ENCODE measurements at regions of chr19 and their contacts with region 1.

Region 1: GRCh38 chr19:7943444-7944176 is at the start of gene TIMM44:
- DNase-seq: peak; percentile 97
- ATAC-seq: peak; percentile 99
- H3K4me3 ChIP-seq: peak within 1 kb of the TSS; percentile 89
- H3K27ac ChIP-seq: peak within 1 kb of the TSS; percentile 77
- H3K4me1 ChIP-seq: peaks cover 7% of the 10 kb centered on the region
- H3K27me3 ChIP-seq: no peaks in the 10 kb centered on the region
- CTCF ChIP-seq: no peak
- EP300 ChIP-seq: 0 out of 4 replicates have a peak, but pooled peaks of 1 of the 2 experiments have one; percentile 10
- POLR2A ChIP-seq: peak; percentile 94
- RAD21 ChIP-seq: no peak
- polyA plus RNA-seq, gene TIMM44: 6.6 to 10.0 TPM

Region 2: GRCh38 chr19:7925171-7925851 is 18.3 kb before region 1 on chr19:
- CTCF ChIA-PET with region 1: interaction called, 44 read pairs
- POLR2A ChIA-PET with region 1: interaction called, 18 read pairs
- RAD21 ChIA-PET with region 1: interaction called, 17 read pairs
- SMC1A ChIA-PET with region 1: interaction called, 10 read pairs
- in situ Hi-C with region 1: no loop called
- intact Hi-C with region 1: no loop called
- DNase-seq: no peak
- ATAC-seq: peak; percentile 57
- H3K4me3 ChIP-seq: no peak overlapping the region
- H3K27ac ChIP-seq: no peak overlapping the region
- H3K4me1 ChIP-seq: peaks cover 5% of the 10 kb centered on the region; the same call in 1 of the 2 replicates
- H3K27me3 ChIP-seq: no peaks in the 10 kb centered on the region
- CTCF ChIP-seq: peak; percentile 75 to 85 (median 82)
- EP300 ChIP-seq: no peak
- POLR2A ChIP-seq: no peak
- RAD21 ChIP-seq: peak; percentile 48

Region 3: DNA sequence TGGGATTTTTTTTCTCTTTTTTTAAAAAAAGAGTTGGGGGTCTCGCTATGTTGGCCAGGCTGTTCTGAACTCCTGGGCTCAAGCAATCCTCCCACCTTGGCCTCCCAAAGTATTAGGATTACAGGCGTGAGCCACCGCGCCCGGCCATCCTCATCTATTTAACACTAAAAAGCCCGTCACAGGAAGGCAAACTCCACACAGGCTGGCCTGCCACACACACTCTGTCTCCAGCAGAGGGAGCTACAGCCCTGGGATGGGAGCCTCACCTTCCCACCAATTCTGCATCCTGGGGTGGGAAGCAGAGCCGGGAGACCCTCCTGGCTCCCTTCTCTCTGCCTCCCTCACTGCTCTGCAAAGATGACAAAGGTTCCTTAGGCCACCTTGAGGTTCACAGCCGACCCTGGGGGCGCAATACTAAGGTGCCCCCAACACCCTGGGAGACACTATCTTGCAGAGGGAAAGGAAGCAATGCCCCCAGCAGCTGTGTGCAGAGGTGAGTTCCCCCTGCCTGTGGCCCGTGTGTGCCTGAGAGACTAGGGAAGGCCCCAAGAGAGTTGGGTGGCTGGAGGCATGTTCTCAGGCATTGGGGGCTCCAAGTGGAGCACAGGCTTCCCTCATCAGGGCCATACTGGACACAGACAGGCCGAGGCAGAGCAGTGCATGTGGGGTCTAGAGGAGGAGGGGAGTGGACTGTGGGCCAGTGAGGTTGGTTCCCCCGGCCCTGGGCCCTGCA is 27.3 kb after region 1 on chr19:
- CTCF ChIA-PET with region 1: interaction called, 22 read pairs
- POLR2A ChIA-PET with region 1: no interaction called
- RAD21 ChIA-PET with region 1: no interaction called
- SMC1A ChIA-PET with region 1: interaction called, 4 read pairs
- in situ Hi-C with region 1: no loop called
- intact Hi-C with region 1: no loop called
- DNase-seq: no peak
- ATAC-seq: peak; percentile 76
- H3K4me3 ChIP-seq: no peak overlapping the region
- H3K27ac ChIP-seq: no peak overlapping the region
- H3K4me1 ChIP-seq: no peaks in the 10 kb centered on the region
- H3K27me3 ChIP-seq: no peaks in the 10 kb centered on the region
- CTCF ChIP-seq: peak; percentile 70 to 83 (median 73)
- EP300 ChIP-seq: no peak
- POLR2A ChIP-seq: no peak; the same call in 1 of the 2 replicates
- RAD21 ChIP-seq: peak; percentile 69

Region 4: DNA sequence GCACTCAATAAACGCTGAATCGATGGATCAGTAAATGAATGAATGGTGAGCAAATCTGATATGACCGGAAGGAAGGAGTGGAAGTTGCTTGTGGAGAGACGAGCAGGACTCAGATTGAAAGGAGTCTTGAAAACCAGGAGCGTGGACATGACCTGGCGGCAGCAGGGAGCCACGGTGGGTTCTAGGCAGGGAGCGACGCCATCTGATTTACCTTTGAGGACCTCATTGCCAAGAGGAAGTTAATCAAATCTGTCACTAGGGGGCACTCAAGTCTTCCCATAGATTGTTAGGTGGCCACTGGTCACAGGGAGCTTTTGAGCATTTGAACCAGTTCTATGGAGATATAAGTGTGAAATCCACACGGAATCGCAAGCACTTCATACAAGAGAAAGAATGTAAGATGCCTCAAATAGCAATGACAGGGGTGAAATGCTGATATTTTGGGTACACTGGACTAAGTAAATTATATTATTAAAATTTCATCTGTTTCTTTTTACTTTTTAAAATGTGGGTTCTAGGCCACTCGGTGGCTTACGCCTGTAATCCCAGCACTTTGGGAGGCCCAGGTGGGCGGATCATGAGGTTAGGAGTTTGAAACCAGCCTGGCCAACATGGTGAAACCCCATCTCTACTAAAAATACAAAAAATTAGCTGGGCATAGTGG is 214.9 kb after region 1 on chr19:
- CTCF ChIA-PET with region 1: interaction called, 7 read pairs
- POLR2A ChIA-PET with region 1: no interaction called
- RAD21 ChIA-PET with region 1: interaction called, 10 read pairs
- SMC1A ChIA-PET with region 1: no interaction called
- in situ Hi-C with region 1: no loop called
- intact Hi-C with region 1: loop called (anchors 10 kb)
- DNase-seq: peak; percentile 57
- ATAC-seq: peak; percentile 89
- H3K4me3 ChIP-seq: no peak overlapping the region
- H3K27ac ChIP-seq: no peak overlapping the region
- H3K4me1 ChIP-seq: no peaks in the 10 kb centered on the region; the same call in 1 of the 2 replicates
- H3K27me3 ChIP-seq: no peaks in the 10 kb centered on the region
- CTCF ChIP-seq: peak; percentile 66 to 88 (median 73); a peak in 4 of 6 replicates
- EP300 ChIP-seq: no peak
- POLR2A ChIP-seq: no peak
- RAD21 ChIP-seq: peak; percentile 97